Ovary (tissue), 10 donors: ENCODE measurements at regions of chr9 and their contacts with region 1.

Region 1: GRCh38 chr9:4984621-4985385 is at the start of gene JAK2:
- DNase-seq: peak; percentile 87 to 91 (median 88)
- H3K4me3 ChIP-seq: peak within 1 kb of the TSS; percentile 89
- H3K27ac ChIP-seq: peak within 1 kb of the TSS; percentile 93 to 99
- H3K4me1 ChIP-seq: peaks cover 8% of the 10 kb centered on the region
- H3K27me3 ChIP-seq: no peaks in the 10 kb centered on the region
- CTCF ChIP-seq: peak in 1 of 3 donors; percentile 42
- EP300 ChIP-seq: no peak
- POLR2A ChIP-seq: peak; percentile 33
- total RNA-seq, gene JAK2: 14.4 to 31.4 (median 19.8) TPM

Region 2: DNA sequence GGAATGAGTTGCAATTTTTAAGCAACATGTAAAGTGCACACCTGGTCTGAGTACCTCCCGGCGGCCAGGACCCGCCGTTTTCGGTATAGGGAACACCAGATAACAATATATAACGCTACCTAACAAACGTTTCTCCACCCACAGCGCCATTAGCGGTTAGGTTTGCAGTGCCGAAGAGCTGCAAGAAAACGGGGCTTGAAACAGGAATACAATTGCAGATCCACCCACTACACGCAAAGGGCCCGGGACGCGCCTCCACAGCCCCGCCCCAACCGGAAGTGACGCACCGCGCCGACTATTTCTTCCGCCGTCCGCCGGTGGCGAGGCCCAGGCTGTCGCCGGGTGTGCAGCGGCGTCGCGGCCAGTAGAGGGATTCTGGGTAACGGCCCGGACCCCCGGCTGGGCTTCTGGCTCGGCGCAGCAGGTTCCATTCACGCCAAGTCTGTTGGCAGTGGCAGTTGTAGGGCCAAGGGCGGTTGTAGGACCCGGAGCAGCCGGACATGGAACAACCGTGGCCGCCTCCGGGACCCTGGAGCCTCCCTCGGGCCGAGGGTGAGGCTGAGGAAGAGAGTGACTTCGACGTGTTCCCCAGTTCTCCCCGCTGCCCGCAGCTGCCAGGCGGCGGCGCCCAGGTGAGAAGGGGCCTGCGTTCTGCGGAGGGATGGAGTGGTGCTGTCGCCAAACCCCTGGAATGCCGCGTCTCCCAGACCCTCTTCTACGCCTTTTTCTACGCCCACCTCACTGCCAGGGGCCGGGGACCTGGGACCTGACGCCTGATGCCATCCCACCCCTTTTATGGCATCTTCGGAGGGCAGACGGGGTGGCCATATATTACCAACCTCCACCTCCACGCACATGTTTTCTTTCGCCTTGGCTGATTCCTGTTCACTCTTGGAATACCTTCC is 305.3 kb before region 1 on chr9 and contains the start of gene CDC37L1:
- intact Hi-C with region 1: loop called in 1 of 4 experiments (anchors 10 kb)
- DNase-seq: peak; percentile 99
- H3K4me3 ChIP-seq: peak within 1 kb of the TSS; percentile 59
- H3K27ac ChIP-seq: peak within 1 kb of the TSS; percentile 90 to 91
- H3K4me1 ChIP-seq: peaks cover 4% of the 10 kb centered on the region
- H3K27me3 ChIP-seq: no peaks in the 10 kb centered on the region
- CTCF ChIP-seq: peak; percentile 55 to 86 (median 85)
- EP300 ChIP-seq: no peak
- POLR2A ChIP-seq: peak; percentile 98
- total RNA-seq, gene CDC37L1: 19.6 to 24.2 (median 21.8) TPM

Region 3: DNA sequence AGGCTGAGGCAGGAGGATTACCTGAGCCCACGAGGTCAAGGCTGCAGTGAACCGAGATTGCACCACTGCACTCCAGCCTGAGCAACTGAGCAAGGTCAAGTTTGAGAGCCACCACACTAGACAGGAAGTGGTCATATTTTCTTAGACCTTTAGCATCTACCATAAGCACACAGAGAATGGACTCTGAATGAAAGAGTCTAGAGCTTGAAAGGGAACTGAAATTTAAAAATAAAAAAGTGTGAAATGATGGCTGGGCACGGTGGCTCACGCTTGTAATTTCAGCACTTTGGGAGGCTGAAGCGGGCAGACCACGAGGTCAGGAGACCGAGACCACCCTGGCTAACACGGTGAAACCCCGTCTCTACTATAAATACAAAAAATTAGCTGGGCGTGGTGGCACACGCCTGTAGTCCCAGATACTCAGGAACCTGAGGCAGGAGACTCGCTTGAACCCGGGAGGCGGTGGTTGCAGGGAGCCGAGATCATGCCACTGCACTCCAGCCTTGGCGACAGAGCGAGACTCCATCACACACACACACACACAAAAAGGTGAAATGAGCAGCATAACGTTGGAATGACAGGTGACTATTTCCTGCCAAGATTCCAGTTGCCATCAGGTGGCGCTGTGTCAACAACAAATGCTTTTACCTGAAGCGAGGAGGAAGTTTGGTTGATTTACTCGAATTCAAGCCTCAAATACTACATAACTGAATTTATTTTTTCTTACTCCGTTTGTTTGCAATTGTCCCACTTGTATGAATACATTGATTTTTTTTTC is 222.5 kb before region 1 on chr9:
- intact Hi-C with region 1: loop called in 3 of 4 experiments (anchors 5 to 10 kb)
- DNase-seq: peak; percentile 60 to 80 (median 77)
- H3K4me3 ChIP-seq: no peak overlapping the region
- H3K27ac ChIP-seq: no peak overlapping the region
- H3K4me1 ChIP-seq: no peaks in the 10 kb centered on the region
- H3K27me3 ChIP-seq: no peaks in the 10 kb centered on the region
- CTCF ChIP-seq: peak; percentile 33 to 80 (median 75)
- EP300 ChIP-seq: no peak
- POLR2A ChIP-seq: no peak

Region 4: DNA sequence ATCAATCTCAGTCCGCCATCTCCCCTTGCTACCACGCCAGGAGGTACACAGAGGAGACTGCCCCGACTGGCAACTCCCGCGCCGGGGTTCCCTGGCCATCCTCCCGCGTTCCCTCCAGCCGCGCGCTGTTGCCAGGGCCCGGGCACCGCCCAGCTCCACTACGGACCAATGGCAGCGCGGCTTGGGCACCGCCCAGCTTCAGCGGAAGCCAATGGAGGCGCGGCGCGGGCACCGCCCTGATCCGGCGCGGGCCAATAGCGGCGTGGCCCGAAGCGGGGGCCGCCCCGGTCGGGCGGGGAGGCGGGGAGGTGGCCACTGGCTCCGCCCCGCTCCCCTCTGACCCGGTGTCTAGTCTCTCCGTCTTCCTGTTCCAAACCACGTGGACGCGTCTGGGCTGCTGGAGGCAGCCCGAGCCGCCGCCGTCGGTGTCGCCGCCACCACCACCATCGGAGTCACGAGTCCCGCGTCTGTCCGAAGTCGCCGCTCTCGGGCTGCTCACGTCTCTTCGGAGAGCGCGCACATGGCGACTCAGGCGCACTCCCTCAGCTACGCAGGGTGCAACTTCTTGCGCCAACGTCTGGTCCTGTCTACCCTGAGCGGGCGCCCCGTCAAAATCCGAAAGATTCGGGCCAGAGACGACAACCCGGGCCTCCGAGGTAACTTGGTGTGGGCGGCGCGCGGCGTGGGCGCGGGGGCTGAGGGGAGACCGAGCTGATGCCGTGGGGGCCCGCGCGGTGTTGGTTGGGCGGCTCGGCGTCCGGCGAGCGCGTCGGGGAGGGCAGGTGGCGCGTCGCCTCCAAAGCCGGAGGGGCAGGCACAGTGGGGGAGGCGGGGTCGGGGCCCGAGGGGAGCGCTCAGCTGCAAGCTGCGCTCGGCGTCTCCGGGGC is 192.0 kb before region 1 on chr9 and contains the start of gene RCL1:
- intact Hi-C with region 1: loop called (anchors 10 kb)
- DNase-seq: peak; percentile 95 to 98 (median 96)
- H3K4me3 ChIP-seq: peak within 1 kb of the TSS; percentile 87
- H3K27ac ChIP-seq: peak within 1 kb of the TSS; percentile 42 to 71
- H3K4me1 ChIP-seq: peaks cover 8% of the 10 kb centered on the region
- H3K27me3 ChIP-seq: no peaks in the 10 kb centered on the region
- CTCF ChIP-seq: no peak
- EP300 ChIP-seq: no peak
- POLR2A ChIP-seq: peak; percentile 62
- total RNA-seq, gene RCL1: 28.0 to 68.6 (median 32.7) TPM

Region 5: GRCh38 chr9:4855841-4856240 is 129.0 kb before region 1 on chr9:
- intact Hi-C with region 1: loop called in 1 of 4 experiments (anchors 10 kb)
- DNase-seq: peak in 4 of 5 donors; percentile 37 to 60 (median 44)
- H3K4me3 ChIP-seq: no peak overlapping the region
- H3K27ac ChIP-seq: peak overlapping the region in 1 of 2 donors; percentile 27
- H3K4me1 ChIP-seq: peaks cover 6% of the 10 kb centered on the region
- H3K27me3 ChIP-seq: no peaks in the 10 kb centered on the region
- CTCF ChIP-seq: no peak
- EP300 ChIP-seq: no peak
- POLR2A ChIP-seq: no peak

Region 6: DNA sequence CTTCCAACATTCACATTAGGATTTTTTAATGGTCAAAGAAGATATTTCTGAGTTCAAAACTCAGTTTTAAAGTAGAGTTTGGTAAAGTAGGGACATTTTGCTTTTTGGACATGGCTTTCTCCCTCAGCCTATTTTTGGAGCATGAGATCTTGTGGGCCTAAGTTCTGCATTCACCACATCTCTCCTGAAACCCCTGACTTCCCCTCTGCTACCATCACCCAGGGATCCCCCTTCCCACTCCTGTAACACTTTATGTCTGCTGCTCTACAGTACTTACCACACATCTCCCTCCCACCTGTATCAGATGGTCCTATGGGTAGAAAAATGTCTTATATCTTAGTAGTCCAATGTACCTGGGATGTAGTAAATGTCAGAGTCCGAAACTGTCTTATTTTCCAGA is 48.0 kb before region 1 on chr9:
- intact Hi-C with region 1: no loop called
- DNase-seq: no peak
- H3K4me3 ChIP-seq: no peak overlapping the region
- H3K27ac ChIP-seq: no peak overlapping the region
- H3K4me1 ChIP-seq: peaks cover 12% of the 10 kb centered on the region
- H3K27me3 ChIP-seq: no peaks in the 10 kb centered on the region
- CTCF ChIP-seq: no peak
- EP300 ChIP-seq: no peak
- POLR2A ChIP-seq: no peak

Region 7: GRCh38 chr9:5052838-5053237 is 68.0 kb after region 1 on chr9:
- intact Hi-C with region 1: no loop called
- DNase-seq: no peak
- H3K4me3 ChIP-seq: no peak overlapping the region
- H3K27ac ChIP-seq: no peak overlapping the region
- H3K4me1 ChIP-seq: no peaks in the 10 kb centered on the region
- H3K27me3 ChIP-seq: no peaks in the 10 kb centered on the region
- CTCF ChIP-seq: no peak
- EP300 ChIP-seq: no peak
- POLR2A ChIP-seq: no peak

Region 8: DNA sequence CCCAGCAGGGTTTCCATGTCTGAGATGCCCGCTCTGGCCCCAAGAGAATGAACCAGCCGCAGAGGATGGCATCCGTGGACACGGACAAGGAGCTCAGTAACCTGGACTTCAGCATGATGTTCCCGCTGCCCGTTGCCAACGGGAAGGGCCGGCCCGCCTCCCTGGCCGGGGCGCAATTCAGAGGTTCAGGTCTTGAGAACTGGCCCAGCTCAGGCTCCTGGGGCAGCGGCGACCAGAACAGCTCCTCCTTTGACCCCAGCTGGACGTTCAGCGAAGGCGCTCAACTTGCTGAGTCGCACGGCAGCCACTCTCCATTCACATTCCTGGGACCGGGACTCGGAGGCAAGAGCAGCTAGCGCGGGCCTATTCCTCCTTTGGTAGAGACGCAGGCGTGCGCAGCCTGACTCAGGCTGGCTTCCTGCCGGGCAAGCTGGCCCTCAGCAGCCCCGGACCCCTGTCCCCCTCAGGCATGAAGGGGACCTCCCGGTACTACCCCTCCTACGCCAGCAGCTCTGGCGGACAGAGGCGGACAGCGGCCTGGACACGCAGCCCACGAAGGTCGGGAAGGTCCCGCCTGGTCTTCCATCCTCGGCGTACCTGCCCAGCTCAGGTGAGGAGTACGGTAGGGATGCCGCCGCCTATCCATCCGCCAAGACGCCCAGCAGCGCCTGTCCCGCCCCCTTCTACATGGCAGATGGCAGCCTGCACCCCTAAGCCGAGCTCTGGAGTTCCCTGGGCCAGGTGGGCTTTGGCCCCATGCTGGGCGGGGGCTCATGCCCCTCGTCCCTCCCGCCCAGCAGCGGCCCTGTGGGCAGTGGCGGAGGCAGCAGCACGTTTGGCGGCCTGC is 126.3 kb after region 1 on chr9:
- intact Hi-C with region 1: no loop called
- DNase-seq: peak in 2 of 5 donors; percentile 12 to 13
- H3K4me3 ChIP-seq: no peak overlapping the region
- H3K27ac ChIP-seq: no peak overlapping the region
- H3K4me1 ChIP-seq: no peaks in the 10 kb centered on the region
- H3K27me3 ChIP-seq: no peaks in the 10 kb centered on the region
- CTCF ChIP-seq: no peak
- EP300 ChIP-seq: no peak
- POLR2A ChIP-seq: no peak

Region 9: DNA sequence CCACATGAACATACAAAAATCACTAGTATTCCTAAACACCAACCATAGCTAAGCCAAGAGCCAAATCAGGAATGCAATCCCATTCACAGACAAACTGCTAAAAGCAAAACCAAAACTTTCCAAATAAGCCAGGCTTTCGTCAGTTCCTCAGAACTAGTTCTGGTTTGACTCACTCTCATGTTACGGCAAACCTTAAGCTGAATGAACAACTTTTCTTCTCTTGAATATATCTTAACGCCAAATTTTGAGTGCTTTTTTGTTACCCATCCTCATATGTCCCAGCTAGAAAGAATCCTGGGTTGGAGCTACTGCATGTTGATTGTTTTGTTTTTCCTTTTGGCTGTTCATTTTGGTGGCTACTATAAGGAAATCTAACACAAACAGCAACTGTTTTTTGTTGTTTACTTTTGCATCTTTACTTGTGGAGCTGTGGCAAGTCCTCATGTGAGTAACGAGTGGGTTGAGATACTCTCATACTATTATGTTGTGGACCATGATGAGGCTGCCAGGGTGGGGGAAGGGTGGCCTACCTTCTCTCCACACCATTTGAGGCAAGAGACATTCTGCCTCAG is 525.6 kb after region 1 on chr9 and contains the start of gene PDCD1LG2:
- intact Hi-C with region 1: no loop called
- DNase-seq: no peak
- H3K4me3 ChIP-seq: peak within 1 kb of the TSS; percentile 13
- H3K27ac ChIP-seq: peak within 1 kb of the TSS; percentile 9 to 52
- H3K4me1 ChIP-seq: peaks cover 2% of the 10 kb centered on the region
- H3K27me3 ChIP-seq: no peaks in the 10 kb centered on the region
- CTCF ChIP-seq: no peak
- EP300 ChIP-seq: no peak
- POLR2A ChIP-seq: no peak
- total RNA-seq, gene PDCD1LG2: 0.51 to 2.0 (median 1.2) TPM